Endothelial cell of umbilical vein (primary cell): ENCODE measurements at regions of chr6 and their contacts with region 1.

Region 1: DNA sequence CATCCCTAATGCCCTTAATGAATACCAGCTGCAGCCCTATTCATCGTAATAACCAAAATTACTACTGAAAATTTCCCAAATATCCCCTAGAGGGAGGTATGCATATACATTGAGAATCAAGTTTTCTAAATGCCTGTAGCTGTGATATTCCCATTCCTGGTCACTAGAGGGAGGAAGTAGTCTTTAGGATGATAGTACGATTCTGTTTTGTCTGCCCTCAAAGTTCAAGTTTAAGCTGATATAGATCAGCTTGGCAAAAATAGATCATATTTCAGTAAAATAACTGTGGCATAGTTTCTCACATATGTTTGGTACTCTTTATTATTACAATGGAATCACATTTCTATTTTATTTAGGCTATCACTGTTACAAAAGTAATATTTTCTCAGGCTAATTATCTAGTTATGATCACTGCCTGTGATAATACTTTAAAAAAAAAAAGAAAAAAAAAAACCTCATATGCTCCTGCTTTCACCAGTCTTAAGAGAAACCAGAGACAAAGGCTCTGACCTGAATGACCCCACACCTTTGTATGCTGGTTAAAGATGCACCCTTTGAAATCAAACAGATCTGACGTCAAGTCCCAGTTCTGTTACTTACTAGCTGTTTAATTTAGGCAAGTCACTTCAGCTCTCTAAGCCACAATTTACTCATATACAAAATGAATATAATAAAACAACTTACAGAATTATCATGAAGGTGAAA is 11.0 kb downstream of the TSPYL1 start:
- DNase-seq: peak; percentile 82
- H3K4me3 ChIP-seq: no peak overlapping the region
- H3K27ac ChIP-seq: no peak overlapping the region
- H3K4me1 ChIP-seq: no peaks in the 10 kb centered on the region
- H3K27me3 ChIP-seq: no peaks in the 10 kb centered on the region
- CTCF ChIP-seq: peak; percentile 63 to 68
- POLR2A ChIP-seq: no peak

Region 2: GRCh38 chr6:116127771-116128493 is 140.8 kb before region 1 on chr6:
- CTCF ChIA-PET with region 1: no interaction called
- POLR2A ChIA-PET with region 1: no interaction called
- dilution Hi-C with region 1: no loop called
- intact Hi-C with region 1: no loop called
- DNase-seq: no peak
- H3K4me3 ChIP-seq: no peak overlapping the region
- H3K27ac ChIP-seq: no peak overlapping the region
- H3K4me1 ChIP-seq: no peaks in the 10 kb centered on the region
- H3K27me3 ChIP-seq: no peaks in the 10 kb centered on the region
- CTCF ChIP-seq: no peak
- POLR2A ChIP-seq: no peak

Region 3: GRCh38 chr6:116229287-116229913 is 39.3 kb before region 1 on chr6:
- CTCF ChIA-PET with region 1: interaction called, 10 read pairs
- POLR2A ChIA-PET with region 1: no interaction called
- dilution Hi-C with region 1: no loop called
- intact Hi-C with region 1: no loop called
- DNase-seq: peak; percentile 58
- H3K4me3 ChIP-seq: no peak overlapping the region
- H3K27ac ChIP-seq: no peak overlapping the region
- H3K4me1 ChIP-seq: no peaks in the 10 kb centered on the region
- H3K27me3 ChIP-seq: no peaks in the 10 kb centered on the region
- CTCF ChIP-seq: no peak
- POLR2A ChIP-seq: no peak

Region 4: DNA sequence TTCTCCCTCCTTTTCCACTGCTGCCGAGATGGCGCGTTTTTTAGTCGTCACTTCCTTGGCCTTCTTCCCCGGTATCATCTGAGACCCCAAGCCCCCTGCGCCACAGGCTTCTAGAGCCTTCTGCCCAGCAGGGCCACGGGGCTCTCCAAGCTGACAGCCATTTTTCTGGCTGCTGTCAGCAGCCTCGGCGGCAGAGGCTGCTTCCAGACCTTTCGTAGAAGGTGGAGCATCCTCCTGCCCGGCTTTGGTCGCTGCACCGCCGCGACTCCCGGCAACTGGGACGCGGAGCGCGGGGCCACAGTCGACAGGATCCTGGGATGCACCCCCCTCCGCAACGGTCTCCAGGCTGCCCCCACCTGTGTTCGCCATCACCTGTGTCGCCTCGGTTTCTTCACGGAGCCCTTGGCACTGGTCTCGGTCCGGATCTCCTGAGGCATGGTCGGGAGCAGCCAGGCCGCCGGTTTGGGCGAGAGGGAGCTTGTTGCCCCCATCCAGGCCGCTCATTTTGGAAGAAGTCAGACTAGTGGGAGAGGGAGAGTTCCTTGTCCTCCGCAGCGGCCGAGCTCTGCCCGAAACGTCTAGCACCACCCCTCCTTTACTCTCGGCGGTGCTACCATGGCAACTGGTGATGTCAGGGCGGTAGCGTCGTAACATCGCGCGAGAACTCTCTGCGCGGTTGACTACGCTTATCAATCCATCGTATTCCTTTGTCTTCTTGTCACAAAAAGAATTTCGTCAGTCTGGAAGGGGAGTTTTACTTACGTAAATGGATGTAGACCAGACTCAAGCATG is 15.0 kb before region 1 on chr6 and contains the start of gene TSPYL4:
- CTCF ChIA-PET with region 1: interaction called, 38 read pairs
- POLR2A ChIA-PET with region 1: interaction called, 8 read pairs
- dilution Hi-C with region 1: no loop called
- intact Hi-C with region 1: no loop called
- DNase-seq: peak; percentile 98
- H3K4me3 ChIP-seq: peak within 1 kb of the TSS; percentile 40 to 95 (median 77)
- H3K27ac ChIP-seq: peak within 1 kb of the TSS; percentile 98
- H3K4me1 ChIP-seq: peaks cover 53% of the 10 kb centered on the region
- H3K27me3 ChIP-seq: no peaks in the 10 kb centered on the region
- CTCF ChIP-seq: no peak
- POLR2A ChIP-seq: peak; percentile 83
- total RNA-seq, gene TSPYL4: 24.5 and 34.4 TPM in 2 replicates

Region 5: DNA sequence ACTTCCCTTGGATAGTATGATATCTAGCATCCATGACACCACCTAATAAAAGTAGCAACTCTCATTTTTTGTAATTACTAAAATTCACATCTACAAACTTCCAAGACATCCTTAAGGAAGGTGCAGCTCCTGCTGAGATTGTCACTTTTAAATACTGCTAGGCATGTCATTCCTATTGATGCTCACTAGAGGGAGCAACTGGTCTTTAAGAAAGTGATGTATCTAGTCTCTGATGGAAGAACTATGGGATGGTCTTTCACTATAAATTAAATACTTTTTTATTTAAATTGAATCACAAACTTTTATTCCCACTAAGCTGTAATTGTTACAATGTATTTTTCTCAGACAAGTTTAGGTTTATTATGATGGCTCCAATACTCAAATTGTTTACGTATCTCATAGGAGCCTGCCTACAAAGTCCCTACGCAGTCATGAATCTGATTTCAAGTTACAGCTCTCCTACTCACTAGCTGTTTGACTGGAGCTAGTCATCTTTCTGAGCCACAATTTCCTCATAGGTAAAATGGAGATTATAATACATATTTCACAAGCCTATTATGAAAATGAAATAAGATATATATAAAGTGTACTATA is 19.0 kb after region 1 on chr6:
- CTCF ChIA-PET with region 1: interaction called, 45 read pairs
- POLR2A ChIA-PET with region 1: no interaction called
- dilution Hi-C with region 1: no loop called
- intact Hi-C with region 1: no loop called
- DNase-seq: peak; percentile 65
- H3K4me3 ChIP-seq: no peak overlapping the region
- H3K27ac ChIP-seq: no peak overlapping the region
- H3K4me1 ChIP-seq: no peaks in the 10 kb centered on the region
- H3K27me3 ChIP-seq: no peaks in the 10 kb centered on the region
- CTCF ChIP-seq: peak; percentile 57
- POLR2A ChIP-seq: no peak

Region 6: DNA sequence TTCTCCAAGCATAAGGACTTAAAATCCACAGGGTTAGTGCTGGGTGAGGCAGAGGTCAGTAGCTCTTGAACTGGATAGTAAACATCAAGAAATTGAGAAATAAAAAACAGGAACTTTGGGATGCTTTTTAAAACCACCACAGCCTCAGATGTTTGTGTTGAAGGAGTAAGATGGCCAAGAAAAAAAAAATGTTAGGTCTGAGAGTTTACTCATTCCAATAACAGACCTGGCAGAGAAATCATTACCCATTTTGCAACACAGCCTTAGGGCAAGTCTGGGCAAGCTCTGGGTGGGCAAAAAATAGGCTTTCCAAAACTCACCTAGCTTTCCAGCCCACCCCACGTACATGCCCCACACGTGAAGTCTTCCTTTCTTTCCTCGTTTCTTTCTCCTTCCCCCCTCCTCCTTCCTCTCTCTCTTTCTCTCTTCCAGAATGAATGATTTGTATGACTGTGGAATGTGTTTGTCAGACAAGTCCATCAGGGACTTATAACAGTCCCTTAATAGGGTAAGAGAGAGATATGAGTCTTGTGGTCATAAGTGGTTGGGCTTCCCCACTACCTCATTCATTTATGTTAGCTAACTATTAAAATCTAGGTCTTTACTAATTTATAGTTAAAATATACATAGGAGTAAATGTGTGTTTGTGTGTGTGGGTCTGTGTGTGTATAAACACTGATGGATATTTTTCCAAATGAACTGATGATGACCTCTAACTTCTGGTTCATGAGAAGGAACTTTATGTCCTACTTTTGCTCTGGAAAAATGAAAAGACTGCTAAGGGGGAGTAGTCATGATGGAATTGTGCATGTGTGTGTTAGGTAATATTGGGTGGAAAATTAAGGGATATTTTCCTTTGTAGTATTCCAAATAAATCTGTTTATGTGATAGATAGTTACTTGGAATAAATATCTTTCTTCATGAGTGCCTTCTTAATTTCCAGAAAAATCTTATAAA is 84.1 kb after region 1 on chr6:
- CTCF ChIA-PET with region 1: no interaction called
- POLR2A ChIA-PET with region 1: no interaction called
- dilution Hi-C with region 1: no loop called
- intact Hi-C with region 1: no loop called
- DNase-seq: no peak
- H3K4me3 ChIP-seq: no peak overlapping the region
- H3K27ac ChIP-seq: no peak overlapping the region
- H3K4me1 ChIP-seq: no peaks in the 10 kb centered on the region
- H3K27me3 ChIP-seq: no peaks in the 10 kb centered on the region
- CTCF ChIP-seq: no peak
- POLR2A ChIP-seq: no peak

Region 7: GRCh38 chr6:116531675-116532570 is 263.2 kb after region 1 on chr6:
- CTCF ChIA-PET with region 1: interaction called, 64 read pairs
- POLR2A ChIA-PET with region 1: no interaction called
- dilution Hi-C with region 1: no loop called
- intact Hi-C with region 1: loop called (anchors 1 kb)
- DNase-seq: peak; percentile 86
- H3K4me3 ChIP-seq: no peak overlapping the region
- H3K27ac ChIP-seq: no peak overlapping the region
- H3K4me1 ChIP-seq: peaks cover 16% of the 10 kb centered on the region
- H3K27me3 ChIP-seq: peaks cover 0 to 2% of the 10 kb centered on the region in 2 experiments
- CTCF ChIP-seq: peak; percentile 59 to 74
- POLR2A ChIP-seq: no peak

Region 8: DNA sequence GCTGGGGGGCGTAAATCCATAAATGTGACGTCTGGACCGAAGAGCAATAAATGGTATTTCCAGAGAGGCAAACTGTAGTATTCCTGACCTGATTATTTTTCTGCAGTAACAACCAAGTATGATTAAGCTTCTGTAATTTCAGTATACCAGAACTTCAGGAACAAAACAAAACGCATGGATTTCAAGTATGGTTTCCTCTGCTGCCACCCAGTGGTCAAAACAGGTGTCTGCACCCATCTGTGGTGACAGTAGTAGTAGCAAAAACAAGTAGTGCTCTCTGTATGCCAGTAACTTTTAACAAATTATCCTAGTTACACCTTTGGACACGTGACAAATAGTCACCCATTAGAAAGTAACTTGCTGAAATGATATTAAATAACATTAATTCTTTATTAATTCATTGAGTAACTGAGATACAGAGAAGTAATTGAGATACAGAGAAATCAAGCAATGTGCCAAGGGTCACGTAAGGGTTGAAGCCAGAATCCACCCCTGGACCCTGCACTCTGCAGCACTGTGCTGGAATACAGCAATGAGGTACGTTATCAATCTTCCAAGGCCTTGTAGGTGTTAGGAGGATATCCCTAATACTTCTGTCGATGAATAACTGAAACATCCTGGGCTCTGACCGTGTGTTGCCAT is 292.8 kb after region 1 on chr6:
- CTCF ChIA-PET with region 1: interaction called, 80 read pairs
- POLR2A ChIA-PET with region 1: no interaction called
- dilution Hi-C with region 1: no loop called
- intact Hi-C with region 1: loop called (anchors 1 kb)
- DNase-seq: peak; percentile 84
- H3K4me3 ChIP-seq: no peak overlapping the region
- H3K27ac ChIP-seq: no peak overlapping the region
- H3K4me1 ChIP-seq: peaks cover 6% of the 10 kb centered on the region
- H3K27me3 ChIP-seq: no peaks in the 10 kb centered on the region
- CTCF ChIP-seq: peak; percentile 79 to 84
- POLR2A ChIP-seq: no peak

Region 9: DNA sequence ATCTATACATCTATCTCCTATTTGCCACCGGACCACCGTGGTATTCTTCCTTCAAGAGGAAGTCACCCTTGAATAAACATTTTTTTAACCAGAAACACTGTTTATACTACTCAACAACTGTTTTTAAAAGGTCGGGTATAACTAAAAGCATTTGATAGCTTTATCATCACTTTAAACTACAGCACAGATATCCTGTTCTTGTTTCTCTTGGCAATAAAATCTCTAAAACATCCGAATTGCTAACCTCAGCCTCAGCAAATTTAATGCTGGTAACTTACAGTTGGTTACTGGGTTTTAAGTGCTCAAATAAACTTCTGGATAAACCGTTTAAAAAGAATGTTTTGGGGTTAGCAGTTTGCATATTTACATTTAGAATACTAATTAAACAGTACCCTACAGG is 379.4 kb after region 1 on chr6:
- CTCF ChIA-PET with region 1: interaction called, 16 read pairs
- POLR2A ChIA-PET with region 1: no interaction called
- dilution Hi-C with region 1: no loop called
- intact Hi-C with region 1: loop called (anchors 1 kb)
- DNase-seq: peak; percentile 93
- H3K4me3 ChIP-seq: peak overlapping the region in 1 of 3 experiments; percentile 42
- H3K27ac ChIP-seq: peak overlapping the region; percentile 36
- H3K4me1 ChIP-seq: peaks cover 24% of the 10 kb centered on the region
- H3K27me3 ChIP-seq: no peaks in the 10 kb centered on the region
- CTCF ChIP-seq: no peak
- POLR2A ChIP-seq: peak; percentile 66